ENCODE measurements at regions of chr2 and their contacts with region 1.

Region 1: DNA sequence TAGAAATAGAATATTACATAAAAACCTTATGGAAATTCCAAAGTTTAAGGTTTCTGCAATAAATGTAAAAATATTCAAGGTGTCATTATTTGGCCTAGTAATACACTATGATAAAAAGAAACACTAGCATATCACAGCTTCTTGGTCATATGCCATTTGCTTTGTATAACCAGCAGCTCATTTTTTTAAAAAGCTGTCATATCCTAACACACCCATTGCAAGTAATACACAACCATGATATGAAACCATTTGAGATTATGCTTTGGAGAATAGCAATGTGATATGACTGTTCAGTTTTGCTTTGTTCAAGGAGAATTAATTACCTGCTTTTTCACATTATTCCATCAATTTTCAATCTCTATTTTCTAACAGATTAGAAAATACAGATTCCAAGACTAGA is 149.0 kb downstream of the IKZF2 start:
- DNase-seq: no peak
- ATAC-seq: no peak
- H3K4me3 ChIP-seq: no peak overlapping the region
- H3K27ac ChIP-seq: no peak overlapping the region
- H3K4me1 ChIP-seq: no peaks in the 10 kb centered on the region
- H3K27me3 ChIP-seq: no peaks in the 10 kb centered on the region
- CTCF ChIP-seq: no peak
- EP300 ChIP-seq: no peak
- POLR2A ChIP-seq: no peak
- RAD21 ChIP-seq: no peak

Region 2: DNA sequence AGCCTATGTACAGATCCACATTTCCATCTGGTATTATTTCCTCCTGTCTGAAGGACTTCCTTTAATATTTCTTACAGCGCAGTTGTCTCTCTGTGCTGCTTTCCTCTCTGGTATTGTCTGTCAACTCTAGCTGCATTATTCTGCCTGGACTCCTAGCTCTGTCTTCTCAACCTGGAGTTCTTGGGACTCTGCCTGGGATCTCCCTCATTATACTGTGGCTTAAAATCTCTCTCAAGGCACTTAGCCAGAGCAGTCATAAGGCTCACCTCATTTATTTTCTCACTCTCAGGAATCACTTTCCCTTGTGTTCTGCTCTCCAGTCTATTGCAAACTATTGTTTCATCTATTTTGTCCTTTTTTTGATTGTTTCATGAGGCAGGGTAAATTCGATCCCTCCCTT is 1314.2 kb before region 1 on chr2:
- CTCF ChIA-PET with region 1: no interaction called
- POLR2A ChIA-PET with region 1: no interaction called
- in situ Hi-C with region 1: no loop called
- intact Hi-C with region 1: no loop called
- DNase-seq: no peak
- ATAC-seq: no peak
- H3K4me3 ChIP-seq: no peak overlapping the region
- H3K27ac ChIP-seq: no peak overlapping the region
- H3K4me1 ChIP-seq: no peaks in the 10 kb centered on the region
- H3K27me3 ChIP-seq: no peaks in the 10 kb centered on the region
- CTCF ChIP-seq: no peak
- EP300 ChIP-seq: no peak
- POLR2A ChIP-seq: no peak
- RAD21 ChIP-seq: no peak

Region 3: GRCh38 chr2:212777020-212777491 is 225.3 kb before region 1 on chr2:
- CTCF ChIA-PET with region 1: no interaction called
- POLR2A ChIA-PET with region 1: no interaction called
- in situ Hi-C with region 1: no loop called
- intact Hi-C with region 1: loop called (anchors 10 kb)
- DNase-seq: peak; percentile 6
- ATAC-seq: peak; percentile 41; the same call in 2 of the 3 replicates
- H3K4me3 ChIP-seq: no peak overlapping the region
- H3K27ac ChIP-seq: no peak overlapping the region
- H3K4me1 ChIP-seq: no peaks in the 10 kb centered on the region
- H3K27me3 ChIP-seq: no peaks in the 10 kb centered on the region
- CTCF ChIP-seq: peak; percentile 49
- EP300 ChIP-seq: no peak
- POLR2A ChIP-seq: no peak
- RAD21 ChIP-seq: no peak

Region 4: DNA sequence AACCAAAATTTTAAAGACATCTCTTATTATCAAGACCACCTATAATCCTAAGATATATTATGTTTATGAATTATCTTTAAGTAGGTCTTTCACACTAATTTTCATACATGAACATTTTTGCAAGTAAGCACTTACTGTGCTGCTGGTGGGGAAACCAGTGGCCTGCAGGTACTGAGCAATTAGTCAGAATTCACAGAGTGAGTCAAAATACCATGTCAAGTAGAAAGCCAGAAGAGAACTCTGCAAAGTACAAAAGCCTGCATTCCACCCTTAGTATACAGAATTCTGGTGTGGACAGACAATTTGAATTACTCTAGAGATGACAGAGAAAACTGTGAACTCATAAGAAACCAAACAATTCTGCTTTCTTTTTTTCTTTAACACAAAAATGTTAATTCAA is 34.1 kb before region 1 on chr2:
- CTCF ChIA-PET with region 1: no interaction called
- POLR2A ChIA-PET with region 1: no interaction called
- in situ Hi-C with region 1: no loop called
- intact Hi-C with region 1: no loop called
- DNase-seq: no peak
- ATAC-seq: no peak
- H3K4me3 ChIP-seq: no peak overlapping the region
- H3K27ac ChIP-seq: no peak overlapping the region
- H3K4me1 ChIP-seq: no peaks in the 10 kb centered on the region
- H3K27me3 ChIP-seq: no peaks in the 10 kb centered on the region
- CTCF ChIP-seq: no peak
- EP300 ChIP-seq: no peak
- POLR2A ChIP-seq: no peak
- RAD21 ChIP-seq: no peak

Region 5: DNA sequence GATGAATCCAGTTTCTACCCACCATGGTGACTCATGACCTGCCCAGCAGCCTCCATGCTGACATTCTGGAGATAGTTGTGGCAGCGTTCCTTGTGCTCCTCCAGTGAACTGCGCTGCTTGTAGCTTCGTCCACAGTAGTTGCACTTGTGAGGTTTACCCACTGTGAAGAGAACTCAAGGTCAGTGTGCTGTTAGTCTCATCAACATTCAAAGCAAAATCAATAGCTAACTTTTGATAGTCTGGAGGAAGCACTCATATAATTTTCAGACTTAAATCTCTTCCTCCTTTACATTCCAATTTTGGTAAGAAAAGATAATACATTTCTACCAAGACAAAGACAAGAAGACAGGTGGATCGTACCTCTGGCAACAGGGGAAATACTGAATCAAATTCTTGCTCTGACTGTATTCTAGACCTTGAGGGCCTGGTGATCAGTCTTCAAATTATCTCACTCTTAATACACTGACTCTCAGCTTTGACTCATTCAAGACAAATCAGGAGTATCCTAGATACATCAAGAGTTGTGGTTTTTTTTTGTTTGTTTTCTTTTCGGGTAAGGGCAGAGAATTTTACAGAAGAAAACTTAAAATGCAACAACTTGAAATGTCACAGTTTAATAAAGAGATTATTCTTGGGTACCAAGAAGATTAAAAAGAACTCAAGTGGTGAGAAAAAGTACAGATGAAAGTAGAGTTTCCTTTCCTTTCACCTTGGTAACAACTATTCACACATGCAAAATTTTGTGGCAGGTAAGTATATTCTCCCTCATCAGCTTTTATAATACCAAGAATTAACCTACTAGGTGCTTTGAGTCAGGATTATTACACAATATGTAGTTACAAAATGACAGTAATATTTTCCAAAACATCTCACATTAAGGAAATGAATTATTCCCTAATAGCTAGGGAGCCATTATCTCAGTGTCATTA is 19.9 kb after region 1 on chr2:
- CTCF ChIA-PET with region 1: no interaction called
- POLR2A ChIA-PET with region 1: no interaction called
- in situ Hi-C with region 1: no loop called
- intact Hi-C with region 1: no loop called
- DNase-seq: no peak
- ATAC-seq: no peak
- H3K4me3 ChIP-seq: no peak overlapping the region
- H3K27ac ChIP-seq: no peak overlapping the region
- H3K4me1 ChIP-seq: no peaks in the 10 kb centered on the region
- H3K27me3 ChIP-seq: no peaks in the 10 kb centered on the region
- CTCF ChIP-seq: no peak
- EP300 ChIP-seq: no peak
- POLR2A ChIP-seq: no peak
- RAD21 ChIP-seq: no peak